ENCODE measurements at regions of chr19 and their contacts with region 1.

Region 1: DNA sequence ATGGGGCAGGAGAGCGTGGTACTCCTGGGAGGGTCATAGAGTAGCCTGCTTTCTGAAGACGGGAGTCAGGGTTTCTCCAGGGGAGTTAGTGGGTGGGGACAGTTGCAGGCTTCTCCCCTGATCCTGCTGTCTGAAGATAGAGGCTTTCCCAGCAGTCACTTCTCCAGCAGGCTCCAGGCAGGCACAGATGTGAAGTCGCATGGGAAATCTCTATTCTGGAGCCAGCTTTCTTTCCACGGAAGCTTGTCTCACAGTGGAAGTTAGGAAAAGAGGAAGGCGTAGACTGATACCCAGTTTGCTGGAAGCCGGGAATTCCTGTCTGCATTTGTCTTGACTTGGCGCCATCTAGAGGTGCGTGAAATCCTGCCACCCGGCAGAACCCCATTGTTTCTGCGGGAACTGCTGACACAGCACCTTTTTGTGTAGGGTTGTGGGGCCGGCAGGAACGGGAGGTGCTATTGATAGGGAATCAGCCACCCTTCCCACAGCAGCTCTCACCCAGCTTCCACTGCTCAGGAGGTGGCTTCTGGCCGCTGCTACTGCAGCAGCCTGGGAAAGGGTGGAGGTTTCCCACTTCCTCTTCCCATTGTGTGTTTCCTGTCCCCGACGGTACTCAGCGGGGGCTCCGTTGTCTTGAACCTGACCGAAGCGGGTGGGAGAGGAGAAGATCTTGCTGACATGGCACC is 28.5 kb upstream of the NPAS1 start:
- DNase-seq: peak; percentile 83 to 86 (median 84)
- ATAC-seq: peak; percentile 82
- H3K4me3 ChIP-seq: no peak overlapping the region
- H3K27ac ChIP-seq: peak overlapping the region in 3 of 4 donors; percentile 19 to 22 (median 19)
- H3K4me1 ChIP-seq: peaks cover 24% of the 10 kb centered on the region
- H3K27me3 ChIP-seq: no peaks in the 10 kb centered on the region
- CTCF ChIP-seq: peak; percentile 76 to 91 (median 88)
- POLR2A ChIP-seq: no peak

Region 2: DNA sequence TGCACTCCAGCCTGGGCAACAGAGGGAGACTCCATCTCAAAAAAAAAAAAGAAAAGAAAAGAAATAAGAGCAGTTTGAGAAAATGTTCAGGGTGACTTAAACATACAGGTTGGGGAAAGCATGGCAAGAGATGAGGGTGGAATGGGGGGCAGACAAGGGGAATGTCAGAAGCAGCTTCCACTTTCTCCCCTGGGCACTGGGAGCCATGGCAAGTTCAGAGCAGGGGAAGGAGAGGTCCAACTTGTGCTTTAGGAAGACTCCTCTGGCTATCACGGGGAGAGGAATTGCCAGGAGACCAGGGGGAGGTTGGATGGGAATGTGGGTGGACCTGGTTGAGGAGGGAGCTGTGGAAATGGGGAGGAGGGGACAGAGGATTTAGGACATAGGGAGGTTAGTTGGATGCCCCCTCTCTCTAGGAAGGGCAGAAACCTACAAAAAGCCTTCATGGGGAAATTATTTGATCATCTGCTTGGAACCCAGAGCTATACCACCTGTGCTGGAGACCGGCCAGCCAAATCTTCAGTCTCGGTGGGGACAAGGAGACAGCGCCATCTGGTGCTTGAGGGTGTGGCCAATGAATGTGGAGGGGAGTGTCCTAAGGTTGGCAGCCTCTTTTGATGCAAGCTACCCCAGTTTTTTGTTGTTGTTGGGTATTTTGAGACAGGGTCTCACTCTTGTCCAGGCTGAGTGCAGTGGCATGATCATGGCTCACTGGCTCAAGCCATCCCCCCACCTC is 237.5 kb before region 1 on chr19:
- intact Hi-C with region 1: loop called (anchors 10 kb)
- DNase-seq: peak; percentile 71 to 87 (median 78)
- ATAC-seq: peak; percentile 54
- H3K4me3 ChIP-seq: no peak overlapping the region
- H3K27ac ChIP-seq: no peak overlapping the region
- H3K4me1 ChIP-seq: peaks cover 5% of the 10 kb centered on the region
- H3K27me3 ChIP-seq: no peaks in the 10 kb centered on the region
- CTCF ChIP-seq: peak; percentile 16 to 56 (median 47)
- POLR2A ChIP-seq: no peak

Region 3: DNA sequence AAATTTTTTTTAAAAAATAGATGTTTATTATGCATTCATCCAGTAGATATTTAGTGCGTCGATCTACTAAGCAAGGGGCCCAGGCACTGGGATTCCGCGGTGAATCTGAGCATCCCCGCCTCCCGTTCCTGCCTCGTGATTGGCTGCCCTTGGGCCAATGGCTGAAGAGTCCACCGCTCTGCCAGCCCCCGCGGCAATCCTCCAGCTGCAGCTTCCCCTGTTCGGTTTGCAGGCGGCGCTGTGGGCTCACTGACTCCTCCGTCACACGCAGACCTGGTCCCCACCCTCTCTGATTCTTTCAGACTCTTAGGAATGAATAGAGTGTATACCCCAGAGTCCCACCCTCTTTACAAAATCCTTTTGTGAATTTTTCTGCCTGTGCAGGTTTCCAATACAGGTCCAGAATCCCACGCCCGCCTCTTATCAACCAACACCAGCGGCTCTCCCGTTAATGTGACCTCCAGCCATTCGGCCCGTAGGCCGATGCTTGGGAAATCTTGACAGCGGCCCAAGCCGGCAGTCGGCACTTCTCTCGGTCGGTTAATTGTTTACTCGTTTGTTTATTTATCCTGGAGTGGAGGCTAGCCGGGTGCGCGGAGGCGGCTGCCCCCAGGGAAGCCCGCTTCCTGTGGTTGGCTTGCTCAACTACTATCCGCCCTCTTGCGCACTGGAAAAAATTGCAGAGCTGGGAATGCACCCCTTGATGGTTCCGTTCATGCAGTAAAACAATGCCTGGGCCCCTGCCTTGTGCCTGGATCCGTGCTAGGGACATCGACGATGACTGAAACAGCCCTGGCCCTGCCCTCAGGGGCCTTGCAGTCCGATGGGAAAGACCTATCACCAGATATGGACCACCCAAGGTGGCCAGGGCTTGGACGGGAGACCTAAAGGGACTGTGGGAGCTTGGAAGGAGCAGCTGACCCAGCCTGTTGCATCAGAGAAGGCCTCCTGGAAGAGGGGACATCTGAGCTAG is 134.8 kb before region 1 on chr19:
- intact Hi-C with region 1: loop called (anchors 5 kb)
- DNase-seq: peak; percentile 95 to 98 (median 97)
- ATAC-seq: peak; percentile 68
- H3K4me3 ChIP-seq: no peak overlapping the region
- H3K27ac ChIP-seq: peak overlapping the region; percentile 77 to 89 (median 81)
- H3K4me1 ChIP-seq: peaks cover 21% of the 10 kb centered on the region
- H3K27me3 ChIP-seq: no peaks in the 10 kb centered on the region
- CTCF ChIP-seq: peak; percentile 51 to 92 (median 81)
- POLR2A ChIP-seq: peak in 2 of 3 donors; percentile 27 to 46